Calu3 (cell line): ENCODE measurements at regions of chr6 and their contacts with region 1.

Region 1: DNA sequence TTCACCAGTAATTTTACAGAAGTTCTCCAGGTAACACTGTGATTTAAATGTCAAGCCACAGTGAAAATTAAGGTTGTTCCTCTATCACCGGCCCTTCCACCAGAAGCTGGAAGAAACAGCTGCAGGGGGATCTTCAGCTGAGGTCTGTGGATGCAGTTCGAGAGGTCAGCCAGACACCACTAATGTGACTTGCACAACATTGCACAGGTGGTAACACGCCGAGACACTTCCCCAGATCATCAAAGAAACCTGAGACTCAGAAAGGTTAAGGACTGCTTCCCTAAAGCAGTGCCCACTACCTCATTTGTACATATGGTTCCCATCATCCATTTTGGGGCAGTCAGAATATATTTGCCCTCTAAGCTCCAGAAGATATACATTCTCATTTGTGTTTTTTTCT is 8.1 kb upstream of the SERPINB9 start:
- DNase-seq: no peak
- H3K4me3 Mint-ChIP-seq: no peak overlapping the region
- H3K27ac Mint-ChIP-seq: no peak overlapping the region
- H3K4me1 Mint-ChIP-seq: peaks cover 20% of the 10 kb centered on the region
- H3K27me3 Mint-ChIP-seq: no peaks in the 10 kb centered on the region
- CTCF ChIP-seq: no peak

Region 2: GRCh38 chr6:2589171-2589661 is 322.0 kb before region 1 on chr6:
- CTCF ChIA-PET with region 1: no interaction called
- intact Hi-C with region 1: no loop called
- DNase-seq: peak; percentile 63
- H3K4me3 Mint-ChIP-seq: no peak overlapping the region
- H3K27ac Mint-ChIP-seq: peak overlapping the region; percentile 12
- H3K4me1 Mint-ChIP-seq: peaks cover 14% of the 10 kb centered on the region
- H3K27me3 Mint-ChIP-seq: no peaks in the 10 kb centered on the region
- CTCF ChIP-seq: no peak

Region 3: DNA sequence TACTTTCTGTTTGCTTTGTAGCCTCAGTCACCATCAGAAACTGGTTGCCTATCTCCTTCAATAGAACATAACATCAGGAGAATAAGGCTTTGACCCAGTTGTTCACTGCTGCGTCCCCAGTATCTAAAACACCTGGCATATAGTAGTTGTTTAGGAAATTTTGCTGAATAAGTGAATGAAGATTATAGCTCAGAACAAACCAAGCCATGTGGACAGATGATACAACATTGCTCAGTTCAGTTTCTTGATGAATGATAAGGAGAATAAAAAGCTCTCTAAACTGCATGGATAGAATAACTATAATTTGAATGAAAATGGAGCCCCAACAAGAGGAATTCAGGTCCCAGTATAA is 64.3 kb before region 1 on chr6:
- CTCF ChIA-PET with region 1: interaction called, 6 read pairs
- intact Hi-C with region 1: loop called (anchors 1 kb)
- DNase-seq: no peak
- H3K4me3 Mint-ChIP-seq: peak overlapping the region; percentile 41
- H3K27ac Mint-ChIP-seq: peak overlapping the region; percentile 96
- H3K4me1 Mint-ChIP-seq: peaks cover 22% of the 10 kb centered on the region
- H3K27me3 Mint-ChIP-seq: no peaks in the 10 kb centered on the region
- CTCF ChIP-seq: no peak

Region 4: GRCh38 chr6:2853761-2854395 is 57.3 kb before region 1 on chr6:
- CTCF ChIA-PET with region 1: interaction called, 4 read pairs
- intact Hi-C with region 1: loop called (anchors 2 kb)
- DNase-seq: peak; percentile 73
- H3K4me3 Mint-ChIP-seq: peak overlapping the region; percentile 37
- H3K27ac Mint-ChIP-seq: peak overlapping the region; percentile 97
- H3K4me1 Mint-ChIP-seq: peaks cover 53% of the 10 kb centered on the region
- H3K27me3 Mint-ChIP-seq: no peaks in the 10 kb centered on the region
- CTCF ChIP-seq: no peak

Region 5: GRCh38 chr6:2959909-2960719 is 48.9 kb after region 1 on chr6:
- CTCF ChIA-PET with region 1: no interaction called
- intact Hi-C with region 1: no loop called
- DNase-seq: peak; percentile 20
- H3K4me3 Mint-ChIP-seq: no peak overlapping the region
- H3K27ac Mint-ChIP-seq: no peak overlapping the region
- H3K4me1 Mint-ChIP-seq: peaks cover 22% of the 10 kb centered on the region
- H3K27me3 Mint-ChIP-seq: no peaks in the 10 kb centered on the region
- CTCF ChIP-seq: no peak